ENCODE measurements at regions of chr11 and their contacts with region 1.

Region 1: GRCh38 chr11:102287964-102288724 is 29.1 kb upstream of the BIRC3 start:
- DNase-seq: no peak
- H3K4me3 ChIP-seq: no peak overlapping the region
- CTCF ChIP-seq: peak; percentile 62

Region 2: GRCh38 chr11:102268329-102269193 is 19.6 kb before region 1 on chr11:
- CTCF ChIA-PET with region 1: interaction called, 17 read pairs
- POLR2A ChIA-PET with region 1: no interaction called
- DNase-seq: no peak
- H3K4me3 ChIP-seq: peak overlapping the region; percentile 29; the same call in 1 of the 2 replicates
- CTCF ChIP-seq: no peak

Region 3: DNA sequence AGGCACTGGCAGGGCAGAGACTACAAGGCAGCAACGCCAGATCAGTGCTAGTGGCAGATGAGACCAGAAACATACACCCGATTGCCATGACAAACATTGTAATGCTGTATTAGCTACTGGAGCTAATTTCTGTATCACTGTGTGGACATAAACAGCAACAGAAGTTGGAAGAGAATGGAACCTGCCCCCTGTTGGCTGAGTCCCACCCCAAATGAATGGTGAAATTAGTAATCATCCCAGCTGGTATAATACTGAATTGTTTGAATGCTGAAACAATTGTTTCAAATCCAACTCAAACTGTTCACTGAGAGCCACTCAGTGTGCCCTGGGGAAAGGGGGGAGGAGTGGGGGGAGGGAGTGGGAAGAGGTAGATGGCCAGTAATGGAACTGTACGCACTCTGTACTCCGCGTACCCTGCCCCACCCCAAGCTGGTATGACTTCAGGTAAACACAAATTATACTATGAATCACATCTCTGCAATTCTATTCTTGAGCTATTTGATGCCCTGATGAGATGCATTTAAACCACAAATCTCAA is 18.0 kb after region 1 on chr11:
- CTCF ChIA-PET with region 1: interaction called, 46 read pairs
- POLR2A ChIA-PET with region 1: no interaction called
- DNase-seq: no peak
- H3K4me3 ChIP-seq: no peak overlapping the region
- CTCF ChIP-seq: no peak

Region 4: GRCh38 chr11:102317099-102317767 is 29.1 kb after region 1 on chr11 and contains the start of gene BIRC3:
- CTCF ChIA-PET with region 1: interaction called, 46 read pairs
- POLR2A ChIA-PET with region 1: no interaction called
- DNase-seq: peak; percentile 84
- H3K4me3 ChIP-seq: peak within 1 kb of the TSS; percentile 65
- CTCF ChIP-seq: peak; percentile 43

Region 5: GRCh38 chr11:102346748-102347461 is 58.8 kb after region 1 on chr11 and contains the start of gene BIRC2:
- CTCF ChIA-PET with region 1: interaction called, 57 read pairs
- POLR2A ChIA-PET with region 1: no interaction called
- DNase-seq: no peak
- H3K4me3 ChIP-seq: peak within 1 kb of the TSS; percentile 82
- CTCF ChIP-seq: peak; percentile 94

Region 6: GRCh38 chr11:102495161-102496042 is 207.3 kb after region 1 on chr11:
- CTCF ChIA-PET with region 1: interaction called, 27 read pairs
- POLR2A ChIA-PET with region 1: no interaction called
- DNase-seq: peak; percentile 67
- H3K4me3 ChIP-seq: no peak overlapping the region
- CTCF ChIP-seq: peak; percentile 46

Region 7: GRCh38 chr11:102614485-102614884 is 326.3 kb after region 1 on chr11:
- CTCF ChIA-PET with region 1: interaction called, 25 read pairs
- POLR2A ChIA-PET with region 1: no interaction called
- DNase-seq: no peak
- H3K4me3 ChIP-seq: no peak overlapping the region
- CTCF ChIP-seq: no peak

Measured in AG04449 (cell line).